Panc1 (cell line): ENCODE measurements at regions of chr12 and their contacts with region 1.

Region 1: DNA sequence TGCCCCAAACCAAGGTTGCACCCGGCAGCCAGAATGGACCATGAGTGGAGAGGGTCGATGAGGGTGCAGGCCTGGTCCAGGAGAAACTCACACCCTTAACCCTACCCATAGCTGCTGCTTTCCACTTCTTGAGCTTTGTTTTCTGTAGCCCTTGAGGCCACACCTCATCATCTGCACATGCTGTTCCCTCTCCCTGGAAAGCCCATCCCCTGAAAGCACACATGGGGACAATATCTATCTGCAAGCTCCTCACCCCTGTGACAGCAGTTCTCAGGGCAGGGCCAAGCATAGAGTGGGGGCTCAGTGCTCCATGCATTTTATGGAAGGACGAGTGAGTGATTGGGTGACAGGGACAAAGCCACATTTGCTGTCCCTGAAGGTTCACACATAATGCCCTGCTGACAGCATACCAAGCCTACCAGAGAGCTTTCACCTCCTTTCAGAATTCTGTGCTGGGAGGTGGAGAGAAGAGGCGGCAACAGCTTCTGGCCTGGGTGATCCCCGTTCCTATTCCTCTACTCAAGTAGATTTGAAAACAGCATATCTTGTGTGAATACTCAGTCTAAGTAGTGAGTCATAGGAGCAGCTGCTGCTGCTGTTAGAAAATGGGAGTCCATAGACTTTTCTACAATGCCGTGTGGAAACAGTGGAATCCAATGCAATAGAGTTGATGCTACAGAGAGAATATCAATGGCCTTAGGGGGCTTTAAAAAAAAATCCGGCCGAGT is 44.6 kb downstream of the SRGAP1 start:
- DNase-seq: no peak
- ATAC-seq: peak; percentile 49; the same call in 1 of the 2 replicates
- H3K4me3 ChIP-seq: no peak overlapping the region
- H3K27ac ChIP-seq: peak overlapping the region; percentile 39; the same call in 1 of the 2 replicates
- H3K4me1 ChIP-seq: peaks cover 35% of the 10 kb centered on the region
- H3K27me3 ChIP-seq: no peaks in the 10 kb centered on the region
- CTCF ChIP-seq: no peak

Region 2: GRCh38 chr12:63006536-63006935 is 882.5 kb before region 1 on chr12:
- CTCF ChIA-PET with region 1: no interaction called
- POLR2A ChIA-PET with region 1: no interaction called
- in situ Hi-C with region 1: no loop called
- intact Hi-C with region 1: no loop called
- DNase-seq: no peak
- ATAC-seq: no peak
- H3K4me3 ChIP-seq: no peak overlapping the region
- H3K27ac ChIP-seq: no peak overlapping the region
- H3K4me1 ChIP-seq: no peaks in the 10 kb centered on the region
- H3K27me3 ChIP-seq: peaks cover 3% of the 10 kb centered on the region
- CTCF ChIP-seq: no peak

Region 3: GRCh38 chr12:63948211-63948610 is 59.1 kb after region 1 on chr12:
- CTCF ChIA-PET with region 1: no interaction called
- POLR2A ChIA-PET with region 1: no interaction called
- in situ Hi-C with region 1: no loop called
- intact Hi-C with region 1: no loop called
- DNase-seq: no peak
- ATAC-seq: no peak
- H3K4me3 ChIP-seq: no peak overlapping the region
- H3K27ac ChIP-seq: peak overlapping the region; percentile 42; the same call in 1 of the 2 replicates
- H3K4me1 ChIP-seq: peaks cover 29% of the 10 kb centered on the region
- H3K27me3 ChIP-seq: no peaks in the 10 kb centered on the region
- CTCF ChIP-seq: no peak

Region 4: DNA sequence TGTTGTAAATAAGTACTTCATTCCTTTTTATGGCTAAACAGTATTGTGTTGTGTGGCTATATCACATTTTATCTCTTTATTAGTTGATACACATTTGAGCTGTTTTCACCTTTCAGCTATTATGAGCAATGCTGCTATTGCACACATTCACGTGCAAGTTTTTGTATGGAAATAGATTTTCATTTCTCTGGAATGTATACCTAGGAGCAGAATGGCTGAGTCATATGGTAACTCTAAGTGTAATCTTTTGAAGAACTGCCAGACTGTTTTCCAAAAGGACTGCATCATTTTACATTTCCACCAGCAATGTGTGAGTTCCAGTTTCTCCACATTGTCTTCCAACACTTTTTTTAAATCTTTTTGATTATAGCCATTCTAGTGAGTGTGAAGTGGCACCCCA is 89.4 kb after region 1 on chr12:
- CTCF ChIA-PET with region 1: no interaction called
- POLR2A ChIA-PET with region 1: interaction called, 16 read pairs
- in situ Hi-C with region 1: no loop called
- intact Hi-C with region 1: no loop called
- DNase-seq: peak; percentile 78
- ATAC-seq: peak; percentile 85
- H3K4me3 ChIP-seq: no peak overlapping the region
- H3K27ac ChIP-seq: peak overlapping the region; percentile 18
- H3K4me1 ChIP-seq: peaks cover 35% of the 10 kb centered on the region
- H3K27me3 ChIP-seq: no peaks in the 10 kb centered on the region
- CTCF ChIP-seq: no peak